ENCODE measurements at regions of chr14 and their contacts with region 1.

Region 1: GRCh38 chr14:24146978-24147760 is at the start of gene RNF31:
- DNase-seq: peak; percentile 91 to 99 (median 97)
- ATAC-seq: peak; percentile 91
- H3K4me3 ChIP-seq: peak within 1 kb of the TSS; percentile 93
- H3K4me3 Mint-ChIP-seq: peak within 1 kb of the TSS; percentile 99
- H3K27ac ChIP-seq: peak within 1 kb of the TSS; percentile 76 to 82
- H3K27ac Mint-ChIP-seq: peak within 1 kb of the TSS; percentile 90
- H3K4me1 ChIP-seq: peaks cover 65% of the 10 kb centered on the region
- H3K4me1 Mint-ChIP-seq: peaks cover 61% of the 10 kb centered on the region
- H3K27me3 ChIP-seq: no peaks in the 10 kb centered on the region
- H3K27me3 Mint-ChIP-seq: no peaks in the 10 kb centered on the region
- CTCF ChIP-seq: no peak
- total RNA-seq, gene RNF31: 46.0 to 57.8 TPM

Region 2: GRCh38 chr14:24093901-24094761 is 53.0 kb before region 1 on chr14 and contains the start of gene PCK2:
- CTCF ChIA-PET with region 1: no interaction called
- POLR2A ChIA-PET with region 1: interaction called, 10 read pairs
- intact Hi-C with region 1: no loop called
- DNase-seq: peak; percentile 53 to 82 (median 67)
- ATAC-seq: peak; percentile 77
- H3K4me3 ChIP-seq: peak within 1 kb of the TSS; percentile 97
- H3K4me3 Mint-ChIP-seq: peak within 1 kb of the TSS; percentile 97
- H3K27ac ChIP-seq: peak within 1 kb of the TSS; percentile 71 to 78
- H3K27ac Mint-ChIP-seq: peak within 1 kb of the TSS; percentile 90
- H3K4me1 ChIP-seq: peaks cover 29% of the 10 kb centered on the region
- H3K4me1 Mint-ChIP-seq: peaks cover 37% of the 10 kb centered on the region
- H3K27me3 ChIP-seq: no peaks in the 10 kb centered on the region
- H3K27me3 Mint-ChIP-seq: no peaks in the 10 kb centered on the region
- CTCF ChIP-seq: no peak
- total RNA-seq, gene PCK2: 5.2 to 7.4 TPM

Region 3: GRCh38 chr14:24135834-24136542 is 11.2 kb before region 1 on chr14 and contains the start of gene PSME1:
- CTCF ChIA-PET with region 1: interaction called, 5 read pairs
- POLR2A ChIA-PET with region 1: interaction called, 127 read pairs
- intact Hi-C with region 1: loop called in 1 of 2 experiments (anchors 1 kb)
- DNase-seq: peak; percentile 89 to 97 (median 95)
- ATAC-seq: peak; percentile 97
- H3K4me3 ChIP-seq: peak within 1 kb of the TSS; percentile 74
- H3K4me3 Mint-ChIP-seq: peak within 1 kb of the TSS; percentile 94
- H3K27ac ChIP-seq: peak within 1 kb of the TSS; percentile 72 to 88
- H3K27ac Mint-ChIP-seq: peak within 1 kb of the TSS; percentile 85
- H3K4me1 ChIP-seq: peaks cover 68% of the 10 kb centered on the region
- H3K4me1 Mint-ChIP-seq: peaks cover 70% of the 10 kb centered on the region
- H3K27me3 ChIP-seq: no peaks in the 10 kb centered on the region
- H3K27me3 Mint-ChIP-seq: no peaks in the 10 kb centered on the region
- CTCF ChIP-seq: no peak
- total RNA-seq, gene PSME1: 166 to 171 TPM

Region 4: GRCh38 chr14:24188251-24189058 is 41.3 kb after region 1 on chr14 and contains the start of gene IPO4:
- CTCF ChIA-PET with region 1: no interaction called
- POLR2A ChIA-PET with region 1: interaction called, 19 read pairs
- intact Hi-C with region 1: loop called (anchors 2 to 5 kb)
- DNase-seq: peak; percentile 86 to 98 (median 94)
- ATAC-seq: peak; percentile 91
- H3K4me3 ChIP-seq: peak within 1 kb of the TSS; percentile 75
- H3K4me3 Mint-ChIP-seq: peak within 1 kb of the TSS; percentile 93
- H3K27ac ChIP-seq: peak within 1 kb of the TSS; percentile 70 to 88
- H3K27ac Mint-ChIP-seq: peak within 1 kb of the TSS; percentile 91
- H3K4me1 ChIP-seq: peaks cover 32% of the 10 kb centered on the region
- H3K4me1 Mint-ChIP-seq: peaks cover 45% of the 10 kb centered on the region
- H3K27me3 ChIP-seq: no peaks in the 10 kb centered on the region
- H3K27me3 Mint-ChIP-seq: no peaks in the 10 kb centered on the region
- CTCF ChIP-seq: no peak
- total RNA-seq, gene IPO4: 36.6 to 37.9 TPM

Region 5: DNA sequence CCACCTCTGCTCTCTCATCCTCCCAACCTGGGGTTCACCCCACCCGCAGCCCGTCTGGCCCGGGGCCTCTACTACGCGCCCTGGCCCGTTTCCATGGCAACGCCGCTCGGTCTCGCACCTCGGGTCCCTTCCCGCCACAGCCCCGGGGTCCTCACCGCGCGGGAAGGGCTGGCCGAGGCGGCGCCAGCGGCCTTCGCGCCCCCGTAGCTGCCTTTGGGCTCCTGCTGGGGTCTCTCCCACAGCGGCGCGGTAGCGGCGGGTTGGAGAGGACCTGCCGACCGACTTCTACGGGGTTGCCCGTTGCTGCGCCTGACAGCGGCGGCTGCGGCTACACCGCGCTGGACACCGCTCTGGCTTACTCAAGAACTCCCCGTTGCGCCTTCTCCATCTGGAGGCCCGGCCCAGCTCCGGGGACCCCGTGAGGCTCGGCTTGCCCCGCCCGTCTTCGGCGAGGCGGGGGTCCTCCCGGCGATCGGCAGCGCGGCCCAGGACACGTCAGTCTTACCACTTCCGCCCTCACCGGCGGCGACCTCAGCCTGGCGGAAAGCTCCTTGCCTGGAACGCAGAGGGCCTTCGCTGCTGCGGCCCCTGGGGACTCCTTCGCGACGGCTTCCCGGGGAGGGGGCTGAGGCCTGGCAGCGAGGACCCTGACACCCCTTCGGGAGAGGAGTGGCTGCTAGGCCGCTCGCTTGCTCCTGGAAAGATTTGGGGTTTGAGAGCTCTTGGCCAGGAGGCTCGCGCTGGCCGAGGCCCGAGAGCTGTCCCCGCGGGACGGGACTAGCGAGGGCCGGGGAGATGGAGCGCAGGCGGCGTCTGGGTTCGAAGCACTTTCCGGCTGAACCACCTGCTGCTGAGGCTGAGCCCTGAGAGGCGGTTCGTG is 48.3 kb after region 1 on chr14 and contains the start of gene TM9SF1:
- CTCF ChIA-PET with region 1: no interaction called
- POLR2A ChIA-PET with region 1: interaction called, 21 read pairs
- intact Hi-C with region 1: no loop called
- DNase-seq: peak; percentile 78 to 95 (median 86)
- ATAC-seq: peak; percentile 88
- H3K4me3 ChIP-seq: peak within 1 kb of the TSS; percentile 93
- H3K4me3 Mint-ChIP-seq: peak within 1 kb of the TSS; percentile 87
- H3K27ac ChIP-seq: peak within 1 kb of the TSS; percentile 97 to 99
- H3K27ac Mint-ChIP-seq: peak within 1 kb of the TSS; percentile 92
- H3K4me1 ChIP-seq: peaks cover 37% of the 10 kb centered on the region
- H3K4me1 Mint-ChIP-seq: peaks cover 51% of the 10 kb centered on the region
- H3K27me3 ChIP-seq: no peaks in the 10 kb centered on the region
- H3K27me3 Mint-ChIP-seq: no peaks in the 10 kb centered on the region
- CTCF ChIP-seq: no peak
- total RNA-seq, gene TM9SF1: 12.9 to 13.0 TPM

Region 6: DNA sequence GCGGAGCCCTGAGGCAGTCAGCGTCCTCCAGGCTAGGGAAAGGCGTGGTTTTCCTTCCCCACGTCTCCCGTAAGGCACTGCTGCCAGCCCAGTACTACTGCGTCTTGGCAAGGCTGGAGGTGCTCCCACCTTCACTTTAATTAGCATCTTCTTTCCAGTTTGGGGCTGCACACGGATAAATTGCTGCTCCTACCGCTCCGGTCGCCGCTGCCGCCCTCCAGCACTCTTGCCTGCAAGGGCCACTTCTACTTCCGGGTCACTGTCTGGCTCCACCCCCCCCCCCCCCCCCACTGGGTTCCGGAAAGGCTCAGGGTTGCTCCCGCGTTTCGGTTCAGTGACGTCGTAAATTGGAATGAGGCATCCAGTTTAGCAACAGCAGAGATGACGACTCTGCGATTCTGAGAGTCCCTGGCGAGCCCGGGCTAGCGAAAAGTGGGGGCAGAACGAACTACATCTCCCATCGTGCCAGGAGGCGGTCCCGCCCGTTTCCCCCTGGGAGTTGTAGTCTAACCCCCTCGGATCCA is 85.0 kb after region 1 on chr14 and contains the start of gene NEDD8:
- CTCF ChIA-PET with region 1: no interaction called
- POLR2A ChIA-PET with region 1: interaction called, 3 read pairs
- intact Hi-C with region 1: loop called (anchors 2 to 5 kb)
- DNase-seq: peak; percentile 73 to 94 (median 84)
- ATAC-seq: peak; percentile 87
- H3K4me3 ChIP-seq: peak within 1 kb of the TSS; percentile 98
- H3K4me3 Mint-ChIP-seq: peak within 1 kb of the TSS; percentile 96
- H3K27ac ChIP-seq: peak within 1 kb of the TSS; percentile 81 to 95
- H3K27ac Mint-ChIP-seq: peak within 1 kb of the TSS; percentile 93
- H3K4me1 ChIP-seq: peaks cover 29% of the 10 kb centered on the region
- H3K4me1 Mint-ChIP-seq: peaks cover 66% of the 10 kb centered on the region
- H3K27me3 ChIP-seq: no peaks in the 10 kb centered on the region
- H3K27me3 Mint-ChIP-seq: no peaks in the 10 kb centered on the region
- CTCF ChIP-seq: no peak
- total RNA-seq, gene NEDD8: 42.0 to 43.5 TPM

Region 7: GRCh38 chr14:24271134-24271833 is 124.1 kb after region 1 on chr14 and contains the start of gene RABGGTA:
- CTCF ChIA-PET with region 1: no interaction called
- POLR2A ChIA-PET with region 1: interaction called, 14 read pairs
- intact Hi-C with region 1: no loop called
- DNase-seq: peak; percentile 84 to 99 (median 92)
- ATAC-seq: peak; percentile 83
- H3K4me3 ChIP-seq: peak within 1 kb of the TSS; percentile 86
- H3K4me3 Mint-ChIP-seq: peak within 1 kb of the TSS; percentile 96
- H3K27ac ChIP-seq: peak within 1 kb of the TSS; percentile 92 to 95
- H3K27ac Mint-ChIP-seq: peak within 1 kb of the TSS; percentile 97
- H3K4me1 ChIP-seq: peaks cover 43% of the 10 kb centered on the region
- H3K4me1 Mint-ChIP-seq: peaks cover 40% of the 10 kb centered on the region
- H3K27me3 ChIP-seq: no peaks in the 10 kb centered on the region
- H3K27me3 Mint-ChIP-seq: no peaks in the 10 kb centered on the region
- CTCF ChIP-seq: peak; percentile 75
- total RNA-seq, gene RABGGTA: 52.3 to 55.2 TPM

Measured in CD4-positive, alpha-beta T cell (primary cell).